A549 (cell line): ENCODE measurements at regions of chr9 and their contacts with region 1.

Region 1: DNA sequence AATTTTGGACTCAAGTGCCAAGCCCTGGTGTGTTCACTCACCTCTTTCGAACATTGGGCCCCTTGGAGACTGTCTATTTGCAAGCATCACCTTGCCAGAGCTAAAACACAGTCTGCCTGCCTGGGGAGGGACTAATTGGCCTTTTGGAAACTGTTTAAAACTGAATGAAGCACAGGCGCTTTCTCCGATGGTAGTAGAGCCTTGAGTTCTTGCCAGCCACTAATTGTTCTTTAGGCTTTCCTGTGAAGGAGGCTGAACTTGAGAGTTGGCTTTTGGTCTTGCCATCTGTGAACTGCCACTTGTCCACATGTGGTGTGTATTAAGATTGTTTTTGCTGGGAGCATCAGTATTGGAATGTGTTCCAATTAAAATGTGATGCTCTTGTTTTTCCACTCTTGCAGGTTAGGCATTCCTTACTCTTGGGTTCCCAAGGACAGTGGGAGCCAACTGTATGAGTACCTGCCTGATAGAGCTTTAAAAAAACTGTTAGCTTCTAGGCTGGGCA is 26.0 kb downstream of the GARNL3 start:
- DNase-seq: no peak
- ATAC-seq: no peak
- H3K4me3 ChIP-seq: no peak overlapping the region
- H3K27ac ChIP-seq: no peak overlapping the region
- H3K4me1 ChIP-seq: no peaks in the 10 kb centered on the region
- CTCF ChIP-seq: no peak
- EP300 ChIP-seq: no peak
- POLR2A ChIP-seq: no peak
- RAD21 ChIP-seq: no peak

Region 2: DNA sequence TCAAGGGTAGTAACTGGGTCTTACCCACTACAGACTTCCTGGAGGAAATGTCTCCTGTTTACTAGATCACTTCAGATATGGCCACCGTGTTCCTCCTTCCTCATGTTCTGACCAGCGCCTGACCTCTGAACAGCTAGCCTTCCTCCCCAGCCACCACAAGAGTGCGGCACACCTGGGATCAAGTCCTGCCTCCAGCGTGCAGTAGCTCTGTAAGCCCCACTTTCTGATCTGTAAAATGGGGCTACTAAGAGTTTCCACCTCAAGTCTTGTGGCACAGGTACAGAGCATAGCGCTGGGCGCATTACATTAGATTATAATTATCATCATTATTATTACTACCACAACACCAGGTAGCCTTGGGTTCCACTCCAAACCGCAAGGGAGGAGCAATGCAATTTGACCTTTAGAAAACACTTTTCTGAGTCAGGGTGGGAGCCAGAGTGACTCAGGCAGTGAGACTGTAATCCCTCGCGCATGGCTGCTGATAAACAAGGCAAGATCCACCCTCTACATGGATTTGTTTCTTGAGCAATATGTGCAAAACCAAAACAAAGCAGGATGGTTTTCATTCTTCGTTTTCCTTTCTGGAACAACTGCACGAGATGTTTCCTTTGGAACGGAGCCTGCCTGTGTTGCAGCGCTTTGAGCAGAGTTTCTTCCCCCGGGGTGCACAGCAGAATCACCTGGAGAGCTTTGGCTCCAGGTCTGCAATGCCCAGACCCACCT is 103.2 kb before region 1 on chr9:
- CTCF ChIA-PET with region 1: no interaction called
- POLR2A ChIA-PET with region 1: no interaction called
- DNase-seq: peak; percentile 55 to 60
- ATAC-seq: peak; percentile 87
- H3K4me3 ChIP-seq: no peak overlapping the region
- H3K27ac ChIP-seq: peak overlapping the region; percentile 3 to 75; a peak in 4 of 6 replicates
- H3K4me1 ChIP-seq: peaks cover 23% of the 10 kb centered on the region
- CTCF ChIP-seq: no peak
- EP300 ChIP-seq: no peak
- POLR2A ChIP-seq: no peak
- RAD21 ChIP-seq: no peak

Region 3: GRCh38 chr9:127279717-127280285 is 10.8 kb before region 1 on chr9:
- CTCF ChIA-PET with region 1: interaction called, 10 read pairs
- POLR2A ChIA-PET with region 1: no interaction called
- DNase-seq: no peak
- ATAC-seq: no peak
- H3K4me3 ChIP-seq: no peak overlapping the region
- H3K27ac ChIP-seq: no peak overlapping the region
- H3K4me1 ChIP-seq: no peaks in the 10 kb centered on the region
- CTCF ChIP-seq: no peak
- EP300 ChIP-seq: no peak
- POLR2A ChIP-seq: no peak
- RAD21 ChIP-seq: no peak